Naive thymus-derived CD8-positive, alpha-beta T cell (primary cell): ENCODE measurements at regions of chr6 and their contacts with region 1.

Region 1: DNA sequence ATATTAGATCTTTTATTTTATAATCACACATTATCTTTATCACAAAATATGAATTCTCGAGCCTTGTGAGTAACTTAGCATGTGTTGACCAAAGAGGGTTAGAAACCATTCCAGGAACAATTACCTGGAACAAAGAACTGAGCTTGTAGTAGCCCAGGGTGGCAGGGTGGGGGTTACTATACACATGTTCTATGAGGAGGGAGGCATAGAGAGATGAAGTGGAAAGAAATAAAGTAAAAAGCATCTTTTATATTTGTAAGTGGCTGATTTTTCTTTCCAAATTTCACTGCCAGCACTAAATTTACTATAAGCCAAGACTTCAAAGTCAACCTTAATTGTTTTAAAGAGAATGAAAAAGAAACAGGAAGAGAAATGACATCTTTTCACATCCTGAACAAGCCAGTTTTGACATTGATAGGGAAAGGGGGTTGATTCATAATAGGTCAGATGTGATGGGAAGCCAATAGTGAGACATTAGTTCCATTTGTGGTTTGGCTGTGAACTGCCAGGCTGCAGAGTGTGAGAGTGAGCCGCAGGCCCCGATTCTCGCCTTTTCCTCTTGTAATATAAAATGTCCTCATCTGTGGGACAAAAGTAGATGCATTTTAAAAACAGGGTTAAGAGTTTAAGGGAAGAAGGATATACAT is 52.7 kb upstream of the MYB start:
- DNase-seq: peak in 6 of 10 donors; percentile 20 to 66 (median 38)
- ATAC-seq: peak; percentile 84 to 97
- H3K4me3 Mint-ChIP-seq: peak overlapping the region; percentile 43 to 91 (median 78)
- H3K27ac Mint-ChIP-seq: peak overlapping the region; percentile 95 to 99 (median 96)
- H3K4me1 Mint-ChIP-seq: peaks cover 26 to 45% (median 41%) of the 10 kb centered on the region in 4 donors
- H3K27me3 Mint-ChIP-seq: no peaks in the 10 kb centered on the region

Region 2: DNA sequence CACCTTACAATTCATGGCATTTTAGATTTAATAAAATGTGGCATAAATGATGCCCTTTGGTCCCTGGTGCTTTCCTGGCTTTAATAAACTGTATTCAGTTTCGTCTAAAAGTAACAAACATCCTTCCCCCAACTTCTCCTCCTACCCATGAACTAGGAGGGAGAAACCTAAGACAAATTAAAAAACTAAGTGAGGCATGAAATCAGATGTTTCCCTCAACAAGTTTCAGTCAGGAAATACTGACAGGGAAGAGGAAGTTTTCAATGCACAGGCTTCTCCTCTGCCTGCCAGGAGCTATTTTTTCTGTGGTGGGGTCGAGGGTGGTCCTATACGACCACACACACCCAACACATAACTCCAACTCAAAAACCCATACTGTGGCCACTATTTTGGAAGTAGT is 83.8 kb before region 1 on chr6:
- POLR2A ChIA-PET with region 1: interaction called, 10 read pairs
- DNase-seq: no peak
- ATAC-seq: peak in 1 of 2 donors; percentile 20
- H3K4me3 Mint-ChIP-seq: peak overlapping the region in 7 of 10 donors; percentile 9 to 56 (median 29)
- H3K27ac Mint-ChIP-seq: peak overlapping the region in 9 of 10 donors; percentile 19 to 82 (median 60)
- H3K4me1 Mint-ChIP-seq: peaks cover 30 to 75% (median 68%) of the 10 kb centered on the region in 4 donors
- H3K27me3 Mint-ChIP-seq: no peaks in the 10 kb centered on the region

Region 3: GRCh38 chr6:135054569-135055498 is 73.6 kb before region 1 on chr6 and contains the start of gene HBS1L:
- POLR2A ChIA-PET with region 1: interaction called, 12 read pairs
- DNase-seq: peak; percentile 90 to 98 (median 96)
- ATAC-seq: peak; percentile 97 to 98
- H3K4me3 Mint-ChIP-seq: peak within 1 kb of the TSS; percentile 90 to 100 (median 98)
- H3K27ac Mint-ChIP-seq: peak within 1 kb of the TSS; percentile 95 to 100 (median 99)
- H3K4me1 Mint-ChIP-seq: peaks cover 24 to 44% (median 38%) of the 10 kb centered on the region in 4 donors
- H3K27me3 Mint-ChIP-seq: no peaks in the 10 kb centered on the region
- polyA plus RNA-seq, gene HBS1L: 71.1 to 78.2 (median 71.9) TPM

Region 4: DNA sequence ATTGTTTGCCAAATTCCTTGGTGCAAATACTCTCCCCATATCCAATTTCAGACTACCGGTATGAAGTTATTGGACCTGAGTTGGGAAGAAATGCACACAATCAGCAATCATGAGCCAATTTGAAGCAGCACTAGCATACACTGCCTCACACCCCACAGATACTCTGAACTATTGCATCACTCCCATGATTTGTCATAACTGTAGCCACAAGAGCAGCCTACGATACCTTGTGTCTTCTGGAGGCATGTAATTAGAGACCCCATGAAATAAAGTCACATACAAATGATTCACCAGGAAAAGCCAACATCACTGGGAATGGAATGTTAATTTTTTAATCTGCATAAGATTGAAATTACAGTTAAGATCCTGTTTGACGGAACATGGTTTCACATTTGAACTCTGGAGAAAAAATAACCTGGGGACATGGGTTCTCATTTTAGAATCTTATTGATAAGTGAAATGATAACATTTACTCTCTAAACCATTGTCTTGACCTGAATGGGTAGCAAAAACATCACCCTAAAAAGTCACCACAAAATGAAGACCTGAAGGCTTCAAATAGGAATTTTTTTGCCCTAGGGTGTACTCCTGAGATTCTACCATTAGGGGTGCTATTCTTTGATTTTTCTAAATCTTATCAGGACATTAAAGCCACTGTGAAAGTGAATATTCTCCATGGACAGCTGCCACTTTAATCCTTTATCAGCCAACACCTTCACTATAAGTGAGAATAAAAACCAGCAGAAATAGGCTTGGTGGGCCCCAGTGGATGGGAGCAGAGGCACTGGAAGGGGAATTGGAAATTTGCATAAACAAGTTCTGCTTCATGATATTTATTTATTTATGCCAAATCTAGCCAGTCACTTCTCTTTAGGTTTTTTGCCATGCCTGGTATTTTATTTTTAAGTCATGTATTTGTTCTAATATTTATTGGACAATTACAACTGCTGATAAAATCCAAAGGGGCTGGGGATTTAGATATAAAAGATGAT is 39.3 kb before region 1 on chr6:
- POLR2A ChIA-PET with region 1: interaction called, 19 read pairs
- DNase-seq: peak in 1 of 10 donors; percentile 21
- ATAC-seq: peak; percentile 25 to 34
- H3K4me3 Mint-ChIP-seq: peak overlapping the region; percentile 42 to 80 (median 51)
- H3K27ac Mint-ChIP-seq: peak overlapping the region; percentile 39 to 98 (median 94)
- H3K4me1 Mint-ChIP-seq: peaks cover 36 to 92% (median 81%) of the 10 kb centered on the region in 4 donors
- H3K27me3 Mint-ChIP-seq: no peaks in the 10 kb centered on the region

Region 5: GRCh38 chr6:135094403-135094848 is 34.0 kb before region 1 on chr6:
- POLR2A ChIA-PET with region 1: interaction called, 19 read pairs
- DNase-seq: peak; percentile 6 to 83 (median 48)
- ATAC-seq: peak; percentile 94 to 96
- H3K4me3 Mint-ChIP-seq: peak overlapping the region in 9 of 10 donors; percentile 27 to 77 (median 61)
- H3K27ac Mint-ChIP-seq: peak overlapping the region; percentile 81 to 98 (median 90)
- H3K4me1 Mint-ChIP-seq: peaks cover 19 to 70% (median 56%) of the 10 kb centered on the region in 4 donors
- H3K27me3 Mint-ChIP-seq: no peaks in the 10 kb centered on the region

Region 6: DNA sequence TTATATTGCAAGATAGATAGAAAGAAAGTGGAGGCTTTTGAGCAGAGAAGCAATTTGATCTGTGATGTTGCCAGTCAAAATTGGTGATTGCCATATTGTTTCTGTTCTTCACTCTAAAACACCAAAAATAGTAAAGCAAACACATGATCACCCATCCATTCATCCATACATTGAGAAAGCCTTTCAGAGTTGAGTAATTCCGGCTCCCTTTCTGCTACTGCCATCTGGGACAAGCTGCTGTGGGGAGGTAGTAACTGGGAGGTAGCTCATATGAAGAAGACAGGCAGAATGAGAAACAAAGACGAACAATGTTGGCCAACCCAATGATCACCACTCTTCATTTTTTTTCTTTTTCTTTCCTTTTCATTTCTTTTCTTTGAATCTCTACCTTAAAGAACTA is 22.7 kb before region 1 on chr6:
- POLR2A ChIA-PET with region 1: interaction called, 24 read pairs
- DNase-seq: no peak
- ATAC-seq: no peak
- H3K4me3 Mint-ChIP-seq: peak overlapping the region in 1 of 10 donors; percentile 47
- H3K27ac Mint-ChIP-seq: peak overlapping the region in 9 of 10 donors; percentile 50 to 95 (median 88)
- H3K4me1 Mint-ChIP-seq: peaks cover 32 to 76% (median 59%) of the 10 kb centered on the region in 4 donors
- H3K27me3 Mint-ChIP-seq: no peaks in the 10 kb centered on the region

Region 7: DNA sequence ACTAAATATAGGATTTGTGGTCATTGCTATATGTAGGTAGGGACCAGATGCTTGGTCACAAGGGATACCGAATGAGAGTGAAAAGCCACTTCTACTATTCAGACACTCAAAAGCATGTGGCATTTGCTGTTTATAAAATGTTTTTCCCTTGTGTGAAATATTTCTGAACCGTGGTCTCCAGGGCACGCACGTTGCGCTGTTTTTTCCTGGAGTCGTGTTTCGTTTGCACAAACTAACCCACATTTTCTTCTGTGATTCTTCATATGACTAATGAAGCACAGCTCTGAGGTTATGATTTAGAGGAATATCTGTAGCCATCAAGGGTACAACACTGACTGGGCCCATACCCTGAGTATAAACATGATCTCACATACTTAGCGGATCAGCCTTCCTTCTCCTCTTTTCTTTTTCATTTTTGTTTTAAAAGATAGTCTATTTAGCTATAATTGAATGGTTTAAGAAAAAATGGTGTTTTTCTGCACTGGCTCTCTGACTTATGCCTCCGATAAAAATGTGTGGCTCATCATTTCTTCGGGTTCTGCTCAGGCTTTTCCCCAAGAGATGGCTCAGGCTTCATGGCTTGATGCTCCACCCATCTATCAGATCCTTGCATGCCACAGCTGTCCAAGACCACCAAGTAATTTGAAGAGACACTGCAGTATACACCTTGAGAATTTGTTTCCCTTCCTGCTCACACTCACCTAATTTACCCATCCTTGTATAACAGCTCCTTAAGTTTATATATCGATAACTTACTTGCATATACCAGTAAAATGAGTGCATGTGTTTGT is 13.8 kb before region 1 on chr6:
- POLR2A ChIA-PET with region 1: interaction called, 25 read pairs
- DNase-seq: no peak
- ATAC-seq: no peak
- H3K4me3 Mint-ChIP-seq: peak overlapping the region in 3 of 10 donors; percentile 11 to 38 (median 12)
- H3K27ac Mint-ChIP-seq: peak overlapping the region in 8 of 10 donors; percentile 12 to 93 (median 78)
- H3K4me1 Mint-ChIP-seq: peaks cover 36 to 77% (median 66%) of the 10 kb centered on the region in 4 donors
- H3K27me3 Mint-ChIP-seq: no peaks in the 10 kb centered on the region

Region 8: DNA sequence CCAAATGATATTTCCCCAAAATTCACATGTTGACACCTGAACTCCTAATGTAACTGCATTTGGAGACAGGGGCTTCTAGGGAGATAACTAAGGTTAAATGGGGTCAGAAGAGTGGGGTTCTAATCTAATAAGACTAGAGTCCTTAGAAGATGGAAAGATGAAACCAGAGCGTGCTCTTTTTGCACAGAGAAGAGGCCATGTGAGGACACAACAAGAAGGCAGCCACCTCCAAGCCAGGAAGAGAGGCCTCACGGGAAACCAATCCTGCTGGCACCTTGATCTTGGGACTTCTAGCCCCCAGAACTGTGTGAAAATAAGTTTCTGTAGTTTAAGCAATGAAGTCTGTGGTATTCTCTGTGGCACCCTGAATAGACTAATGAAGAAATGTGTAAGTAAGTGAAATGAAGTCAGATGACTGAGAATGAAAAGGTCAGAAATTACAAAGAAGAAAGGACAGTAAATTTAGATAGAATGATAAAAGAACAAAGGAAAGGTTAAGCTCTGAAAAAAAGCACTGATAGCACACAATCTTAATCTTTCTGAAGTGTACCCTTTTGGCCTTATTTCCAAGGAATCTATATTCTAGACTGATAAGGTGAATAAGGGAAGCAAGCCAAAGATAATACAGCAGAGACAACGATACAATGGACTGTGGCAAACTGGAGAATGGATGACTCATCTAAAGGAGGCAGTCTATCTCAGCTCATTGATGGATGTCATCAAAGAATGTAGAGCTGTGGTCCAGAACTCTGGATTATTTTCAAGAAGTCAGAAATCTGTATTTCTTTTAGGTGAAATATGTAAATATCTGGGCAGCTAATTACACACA is 163.1 kb after region 1 on chr6:
- POLR2A ChIA-PET with region 1: no interaction called
- DNase-seq: no peak
- ATAC-seq: no peak
- H3K4me3 Mint-ChIP-seq: no peak overlapping the region
- H3K27ac Mint-ChIP-seq: no peak overlapping the region
- H3K4me1 Mint-ChIP-seq: peaks cover 0 to 9% (median 3%) of the 10 kb centered on the region in 4 donors
- H3K27me3 Mint-ChIP-seq: no peaks in the 10 kb centered on the region